ENCODE measurements at regions of chr14 and their contacts with region 1.

Region 1: DNA sequence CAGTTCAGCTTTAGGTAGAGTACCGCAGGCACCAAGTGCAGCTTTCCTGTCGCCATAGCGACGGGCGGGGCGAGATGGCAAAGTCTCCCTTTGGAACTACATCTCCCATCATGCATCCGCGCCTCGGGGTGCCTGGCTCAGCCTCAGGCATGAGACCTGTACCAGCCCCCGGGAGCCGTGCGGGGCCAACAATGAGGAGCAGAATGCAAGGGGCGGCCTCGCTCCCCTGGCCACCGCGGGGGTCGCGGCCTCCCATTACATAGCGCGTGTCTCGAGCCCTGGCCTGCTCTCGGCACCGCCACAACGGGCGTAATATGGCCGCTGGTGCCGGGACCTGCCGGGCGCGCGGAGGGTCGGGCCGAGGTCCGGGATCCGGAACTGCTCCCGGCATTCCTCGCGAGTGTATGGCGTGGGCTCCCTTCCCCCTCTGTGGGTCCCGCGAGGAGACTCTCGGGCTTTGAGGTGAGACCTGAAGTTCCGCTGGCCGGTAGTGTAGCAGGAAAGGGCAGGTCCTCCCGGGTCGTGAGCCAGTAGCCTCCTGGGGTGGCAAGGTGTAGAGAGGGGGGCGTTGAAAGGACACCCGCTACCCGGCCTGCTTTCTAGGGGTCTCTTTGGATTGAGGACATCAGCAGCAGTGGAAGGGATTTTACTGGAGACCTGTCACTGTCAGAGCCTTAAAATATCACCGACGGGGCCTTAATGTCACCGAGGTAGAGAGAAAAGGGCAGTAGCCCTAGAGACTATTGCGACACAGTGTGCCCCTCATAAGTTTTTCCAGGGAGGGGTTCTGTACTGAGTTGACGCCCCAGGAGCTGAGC is at the start of gene THTPA:
- DNase-seq: peak; percentile 86 to 95
- H3K4me3 ChIP-seq: peak within 1 kb of the TSS; percentile 79
- H3K4me1 ChIP-seq: peaks cover 6% of the 10 kb centered on the region
- H3K27me3 ChIP-seq: no peaks in the 10 kb centered on the region

Region 2: DNA sequence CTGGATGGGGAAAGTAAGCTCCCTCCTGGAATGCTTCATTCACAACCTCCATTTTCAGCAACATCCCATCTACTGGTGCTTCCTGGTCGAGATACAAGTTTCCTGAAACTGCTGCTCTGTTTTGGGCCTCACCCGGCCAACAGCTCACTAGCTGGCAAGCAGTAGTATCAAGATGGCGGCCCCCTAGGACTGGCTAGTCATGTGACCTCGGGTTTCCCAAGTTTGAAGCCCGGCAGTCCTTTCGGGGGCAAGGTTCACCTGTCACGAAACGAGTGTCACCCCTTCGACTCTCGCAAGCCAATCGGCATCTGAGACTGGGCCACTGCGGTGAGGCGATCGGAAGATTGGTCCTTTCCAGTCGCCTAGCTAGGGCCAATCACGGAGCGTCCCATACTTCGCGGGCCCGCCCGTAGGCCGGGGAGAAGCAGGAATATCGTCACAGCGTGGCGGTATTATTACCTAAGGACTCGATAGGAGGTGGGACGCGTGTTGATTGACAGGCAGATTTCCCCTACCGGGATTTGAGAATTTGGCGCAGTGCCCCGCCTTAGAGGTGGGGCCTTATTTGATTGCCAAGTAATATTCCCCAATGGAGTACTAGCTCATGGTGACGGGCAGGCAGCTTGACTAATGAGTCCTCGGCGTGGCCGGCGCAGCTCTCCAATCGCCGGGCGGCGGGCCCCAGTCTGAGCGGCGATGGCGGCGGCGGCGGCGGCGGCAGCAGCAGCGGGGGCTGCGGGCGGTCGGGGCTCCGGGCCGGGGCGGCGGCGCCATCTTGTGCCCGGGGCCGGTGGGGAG is 235.1 kb before region 1 on chr14 and contains the start of gene PABPN1:
- in situ Hi-C with region 1: loop called (anchors 10 kb)
- DNase-seq: peak; percentile 98 to 99
- H3K4me3 ChIP-seq: peak within 1 kb of the TSS; percentile 88
- H3K4me1 ChIP-seq: peaks cover 17% of the 10 kb centered on the region
- H3K27me3 ChIP-seq: no peaks in the 10 kb centered on the region